Heart left ventricle (tissue), 16 donors: ENCODE measurements at regions of chr21 and their contacts with region 1.

Region 1: DNA sequence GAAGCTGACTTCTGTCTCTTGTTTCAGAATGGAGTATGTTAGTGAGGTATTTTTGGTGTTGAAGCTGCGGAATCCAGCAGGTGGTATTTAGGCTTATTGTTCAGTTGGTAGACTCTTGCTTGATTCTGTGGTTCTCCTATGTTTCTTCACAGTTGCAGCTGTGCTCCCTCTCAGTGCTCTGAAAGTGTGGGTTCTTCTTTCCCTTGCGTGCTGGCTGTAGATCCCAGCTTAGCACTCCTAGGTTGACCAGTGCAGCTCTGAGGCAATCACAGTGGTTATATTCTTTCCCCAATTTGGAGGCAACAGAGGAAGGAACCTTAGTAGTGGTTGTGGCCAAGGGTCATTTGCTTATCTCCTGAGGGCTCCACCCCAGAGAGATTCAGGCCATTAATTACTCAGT is 269.2 kb upstream of the NRIP1 start:
- DNase-seq: no peak
- ATAC-seq: no peak
- H3K4me3 ChIP-seq: no peak overlapping the region
- H3K27ac ChIP-seq: no peak overlapping the region
- H3K4me1 ChIP-seq: no peaks in the 10 kb centered on the region
- H3K27me3 ChIP-seq: no peaks in the 10 kb centered on the region
- CTCF ChIP-seq: no peak
- POLR2A ChIP-seq: no peak

Region 2: DNA sequence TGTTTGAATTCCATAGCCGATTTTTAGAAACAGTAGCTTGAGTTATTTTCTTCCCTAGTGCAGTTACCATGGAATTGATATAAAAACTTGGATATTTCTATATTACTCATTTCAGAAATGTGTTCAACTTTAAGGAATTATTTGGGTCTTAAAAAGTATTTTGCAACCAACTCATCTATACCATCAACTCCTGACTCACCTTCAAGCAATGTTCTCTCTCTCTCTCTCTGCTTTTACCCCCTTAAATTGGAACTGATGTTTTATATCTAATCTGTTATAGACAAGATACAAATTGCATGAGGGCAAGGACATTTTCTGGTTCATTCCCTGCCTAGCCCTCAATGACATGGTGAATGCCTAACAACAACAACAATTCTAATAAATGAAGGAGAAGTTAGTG is 54.5 kb before region 1 on chr21:
- intact Hi-C with region 1: loop called in 1 of 10 experiments (anchors 2 kb)
- DNase-seq: no peak
- ATAC-seq: no peak
- H3K4me3 ChIP-seq: no peak overlapping the region
- H3K27ac ChIP-seq: no peak overlapping the region
- H3K4me1 ChIP-seq: no peaks in the 10 kb centered on the region
- H3K27me3 ChIP-seq: no peaks in the 10 kb centered on the region
- CTCF ChIP-seq: no peak
- POLR2A ChIP-seq: no peak